ENCODE measurements at regions of chr15 and their contacts with region 1.

Region 1: GRCh38 chr15:34259566-34259965 is 34.8 kb downstream of the EMC4 start:
- DNase-seq: peak in 1 of 2 donors; percentile 33
- ATAC-seq: peak; percentile 54 to 93 (median 88)
- H3K4me3 ChIP-seq: no peak overlapping the region
- H3K27ac ChIP-seq: peak overlapping the region in 9 of 10 donors; percentile 39 to 78 (median 51)
- H3K4me1 ChIP-seq: peaks cover 0 to 31% (median 6%) of the 10 kb centered on the region in 9 donors
- H3K27me3 ChIP-seq: no peaks in the 10 kb centered on the region
- CTCF ChIP-seq: no peak

Region 2: DNA sequence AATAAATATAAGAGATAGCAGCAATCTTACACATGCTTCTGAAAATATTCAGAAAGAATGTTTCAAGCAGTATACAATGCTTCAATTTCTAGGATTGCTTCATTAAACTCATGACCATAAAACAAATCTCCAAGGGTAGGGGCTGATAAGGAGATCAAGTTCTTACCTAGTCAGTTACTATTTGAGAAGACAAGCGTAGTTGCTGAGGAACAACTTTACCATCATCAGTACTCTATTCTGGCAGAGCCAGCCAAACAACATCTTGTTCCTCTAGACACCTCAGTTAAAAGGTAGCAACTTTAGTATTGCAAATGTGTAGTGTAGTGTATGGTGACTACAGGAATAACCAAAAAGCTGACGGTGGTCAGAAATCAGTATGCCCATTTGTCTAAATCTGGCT is 376.6 kb before region 1 on chr15:
- intact Hi-C with region 1: no loop called
- DNase-seq: no peak
- ATAC-seq: no peak
- H3K4me3 ChIP-seq: no peak overlapping the region
- H3K27ac ChIP-seq: no peak overlapping the region
- H3K4me1 ChIP-seq: no peaks in the 10 kb centered on the region
- H3K27me3 ChIP-seq: no peaks in the 10 kb centered on the region
- CTCF ChIP-seq: no peak

Region 3: DNA sequence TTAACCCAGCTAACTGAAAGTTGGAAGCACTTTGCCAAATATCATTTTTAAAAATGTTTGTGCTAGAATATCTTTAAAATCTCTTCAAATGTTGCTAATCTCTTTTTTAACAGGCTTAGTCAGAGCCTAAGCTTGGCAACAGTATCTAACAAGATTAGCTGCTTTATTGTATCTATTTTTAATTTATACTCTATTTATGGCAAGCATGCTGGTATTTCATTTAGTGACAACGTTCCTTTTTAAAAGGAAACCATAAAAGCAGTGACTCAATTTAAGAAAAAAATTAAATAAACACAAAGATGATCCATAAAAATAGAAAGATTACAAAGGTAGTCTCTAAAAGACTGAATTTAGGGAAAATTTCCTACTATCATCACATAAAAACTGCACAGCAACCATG is 37.5 kb after region 1 on chr15:
- intact Hi-C with region 1: no loop called
- DNase-seq: no peak
- ATAC-seq: peak in 4 of 8 donors; percentile 56 to 87 (median 66)
- H3K4me3 ChIP-seq: peak overlapping the region in 1 of 10 donors; percentile 11
- H3K27ac ChIP-seq: peak overlapping the region in 9 of 10 donors; percentile 21 to 76 (median 61)
- H3K4me1 ChIP-seq: peaks cover 0 to 36% (median 19%) of the 10 kb centered on the region in 9 donors
- H3K27me3 ChIP-seq: no peaks in the 10 kb centered on the region
- CTCF ChIP-seq: no peak

Region 4: DNA sequence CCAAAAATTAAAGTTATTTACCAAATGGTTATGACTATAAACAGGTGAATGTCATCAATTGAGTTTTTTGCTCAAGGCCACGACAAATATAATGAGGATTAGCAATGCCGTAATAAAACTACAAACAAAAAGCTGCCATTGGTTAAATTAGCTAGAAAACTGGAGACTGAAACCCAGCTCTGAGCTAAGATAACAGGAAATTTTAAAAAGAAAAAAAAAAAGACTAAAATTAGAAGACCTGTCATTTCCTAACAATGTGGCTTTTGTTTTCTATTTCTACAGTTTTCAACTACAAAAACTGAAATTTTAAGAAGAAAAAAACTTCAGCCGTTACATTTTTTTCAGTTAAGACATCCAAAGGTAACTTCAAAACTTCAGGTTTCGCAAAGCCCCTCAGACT is 68.3 kb after region 1 on chr15:
- intact Hi-C with region 1: loop called in 2 of 10 experiments (anchors 10 kb)
- DNase-seq: no peak
- ATAC-seq: no peak
- H3K4me3 ChIP-seq: no peak overlapping the region
- H3K27ac ChIP-seq: peak overlapping the region in 3 of 10 donors; percentile 22 to 41 (median 28)
- H3K4me1 ChIP-seq: peaks cover 0 to 29% (median 4%) of the 10 kb centered on the region in 9 donors
- H3K27me3 ChIP-seq: no peaks in the 10 kb centered on the region
- CTCF ChIP-seq: no peak